Sigmoid colon (tissue), 7 donors: ENCODE measurements at regions of chr11 and their contacts with region 1.

Region 1: DNA sequence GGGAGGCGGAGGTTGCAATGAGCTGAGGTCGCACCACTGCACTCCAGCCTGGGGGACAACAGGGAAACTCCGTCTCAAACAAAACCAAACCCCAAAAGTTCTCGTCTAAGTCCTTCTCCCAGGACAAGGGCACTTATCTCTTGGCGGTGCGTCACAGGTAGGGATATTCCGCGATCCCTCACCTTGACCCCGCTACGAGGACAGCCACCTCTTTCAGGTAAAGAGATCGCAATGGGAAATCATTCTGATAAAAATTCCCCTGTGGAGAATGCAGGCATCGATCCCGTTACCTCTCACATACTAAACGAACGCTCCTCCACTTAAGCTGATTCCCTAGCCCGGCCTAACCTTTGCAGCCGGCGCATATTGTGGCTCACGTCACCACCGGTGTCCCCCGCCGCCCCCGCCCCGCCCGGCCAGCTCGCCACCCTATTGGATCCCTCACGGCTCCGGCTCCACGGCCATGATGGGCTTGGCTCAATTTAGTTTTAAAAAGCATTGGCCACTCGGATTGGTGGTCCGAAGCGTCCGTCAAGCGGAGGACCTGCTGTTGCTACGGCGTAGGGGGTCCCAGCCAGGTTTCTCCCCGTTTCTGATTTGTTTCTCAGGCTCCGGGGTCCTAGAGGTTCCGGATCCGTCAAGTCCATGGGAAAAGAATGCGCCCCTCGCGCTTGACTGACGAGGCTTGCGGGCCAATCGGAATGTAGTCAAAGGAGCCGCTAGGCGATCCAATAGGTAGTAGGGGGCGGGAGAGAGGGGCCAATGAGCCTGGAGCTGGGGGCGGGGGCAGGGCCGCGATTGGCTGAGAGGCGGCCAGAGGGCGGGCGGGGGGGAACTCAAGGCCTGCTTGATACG is 439 bp upstream of the PPP6R3 start:
- DNase-seq: peak; percentile 99
- H3K4me3 ChIP-seq: peak overlapping the region; percentile 66 to 99 (median 90)
- H3K27ac ChIP-seq: peak overlapping the region; percentile 96 to 99 (median 98)
- H3K4me1 ChIP-seq: peaks cover 0 to 45% (median 36%) of the 10 kb centered on the region in 4 donors
- H3K27me3 ChIP-seq: no peaks in the 10 kb centered on the region
- CTCF ChIP-seq: peak in 1 of 4 experiments; percentile 6
- EP300 ChIP-seq: no peak
- POLR2A ChIP-seq: no peak

Region 2: GRCh38 chr11:68506908-68507307 is 46.8 kb after region 1 on chr11:
- intact Hi-C with region 1: loop called (anchors 5 kb)
- DNase-seq: no peak
- H3K4me3 ChIP-seq: no peak overlapping the region
- H3K27ac ChIP-seq: peak overlapping the region in 2 of 4 donors; percentile 7 to 73
- H3K4me1 ChIP-seq: peaks cover 5 to 99% (median 92%) of the 10 kb centered on the region in 4 donors
- H3K27me3 ChIP-seq: no peaks in the 10 kb centered on the region
- CTCF ChIP-seq: no peak
- EP300 ChIP-seq: no peak
- POLR2A ChIP-seq: no peak

Region 3: GRCh38 chr11:68542617-68543016 is 82.5 kb after region 1 on chr11:
- intact Hi-C with region 1: loop called (anchors 5 kb)
- DNase-seq: peak; percentile 83
- H3K4me3 ChIP-seq: no peak overlapping the region
- H3K27ac ChIP-seq: peak overlapping the region; percentile 56 to 81 (median 65)
- H3K4me1 ChIP-seq: peaks cover 4 to 61% (median 50%) of the 10 kb centered on the region in 4 donors
- H3K27me3 ChIP-seq: no peaks in the 10 kb centered on the region
- CTCF ChIP-seq: no peak
- EP300 ChIP-seq: no peak
- POLR2A ChIP-seq: no peak

Region 4: GRCh38 chr11:68584097-68584496 is 124.0 kb after region 1 on chr11:
- intact Hi-C with region 1: loop called (anchors 5 kb)
- DNase-seq: no peak
- H3K4me3 ChIP-seq: no peak overlapping the region
- H3K27ac ChIP-seq: no peak overlapping the region
- H3K4me1 ChIP-seq: peaks cover 0 to 36% (median 28%) of the 10 kb centered on the region in 4 donors
- H3K27me3 ChIP-seq: no peaks in the 10 kb centered on the region
- CTCF ChIP-seq: peak in 1 of 4 experiments; percentile 36
- EP300 ChIP-seq: no peak
- POLR2A ChIP-seq: no peak

Region 5: DNA sequence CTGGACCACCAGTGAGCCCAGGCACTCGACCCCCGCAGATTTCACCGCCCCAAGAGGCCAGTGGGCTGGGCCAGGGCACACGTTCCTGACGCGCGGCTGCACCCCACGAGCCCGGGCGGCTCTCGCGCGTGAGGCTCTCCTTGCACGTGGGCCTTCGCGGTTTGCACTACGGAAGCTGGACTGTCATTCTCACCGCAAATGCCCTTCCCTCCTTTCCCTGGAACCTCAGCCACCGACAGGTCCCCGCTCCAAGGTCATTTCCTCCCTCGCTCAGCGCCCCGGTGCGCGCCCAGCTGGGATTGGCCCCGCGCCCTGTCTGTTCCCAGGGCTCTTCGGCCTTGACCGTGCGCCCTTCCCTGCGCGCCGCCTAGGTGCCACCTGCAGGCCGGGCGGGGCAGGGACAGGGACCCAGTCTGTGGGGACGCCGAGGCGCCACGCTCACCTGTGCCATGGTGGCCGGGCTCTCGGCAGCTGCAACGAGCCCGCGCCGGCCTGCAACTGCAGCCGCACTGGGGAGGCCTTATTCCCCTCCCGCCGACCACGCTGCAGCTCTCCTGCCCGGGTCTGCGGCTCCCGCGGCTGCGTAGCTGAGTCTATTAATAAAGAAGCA is 383.7 kb after region 1 on chr11:
- intact Hi-C with region 1: loop called (anchors 10 kb)
- DNase-seq: peak; percentile 84
- H3K4me3 ChIP-seq: peak overlapping the region; percentile 13 to 92 (median 81)
- H3K27ac ChIP-seq: peak overlapping the region; percentile 32 to 98 (median 95)
- H3K4me1 ChIP-seq: peaks cover 0 to 41% (median 37%) of the 10 kb centered on the region in 4 donors
- H3K27me3 ChIP-seq: no peaks in the 10 kb centered on the region
- CTCF ChIP-seq: peak; percentile 43 to 57 (median 46)
- EP300 ChIP-seq: no peak
- POLR2A ChIP-seq: no peak